GM12878 (cell line): ENCODE measurements at regions of chr6 and their contacts with region 1.

Region 1: DNA sequence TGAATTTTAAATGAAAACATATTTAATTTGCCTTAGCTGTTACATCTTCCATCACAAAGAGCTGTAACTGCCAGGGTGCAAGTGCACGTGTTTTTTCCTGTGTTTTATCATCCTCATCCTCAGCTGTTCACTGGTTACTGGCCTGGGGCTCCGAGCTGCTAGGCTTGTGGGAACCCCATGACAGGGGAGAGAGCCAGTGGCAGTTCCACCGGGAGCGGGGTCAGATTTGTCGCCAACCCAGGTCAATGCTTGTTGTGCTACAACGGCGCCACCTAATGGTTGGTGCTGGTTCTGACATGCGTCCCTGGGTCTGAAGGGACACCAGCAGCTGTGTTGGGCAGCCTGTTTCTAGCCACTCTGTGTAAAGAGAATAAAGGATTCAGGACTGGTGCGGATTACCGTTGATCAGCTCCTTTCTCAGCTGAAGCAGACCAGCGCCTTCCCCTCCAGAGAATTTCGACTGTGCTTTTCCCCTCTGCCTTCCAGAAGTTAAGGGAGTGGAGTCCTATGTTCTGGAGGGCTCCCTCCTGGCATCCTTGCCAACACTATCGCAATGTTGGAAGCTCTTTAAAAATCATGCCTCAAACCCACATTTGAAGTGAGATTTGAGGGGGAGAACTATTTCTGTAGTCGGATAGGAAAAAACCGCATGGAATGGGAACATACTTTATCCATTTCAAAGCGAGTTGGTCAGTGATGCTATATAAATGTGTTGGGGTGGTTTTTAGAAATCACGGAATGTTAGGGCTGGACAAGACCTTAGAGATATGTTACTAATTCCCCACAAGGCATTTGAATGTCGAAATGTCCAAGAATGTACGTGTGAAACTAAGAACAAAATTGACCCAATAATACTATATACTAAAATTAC is 32.1 kb downstream of the SUMO4 start:
- DNase-seq: peak; percentile 60
- ATAC-seq: peak; percentile 99
- H3K4me3 ChIP-seq: no peak overlapping the region
- H3K27ac ChIP-seq: no peak overlapping the region
- H3K4me1 ChIP-seq: no peaks in the 10 kb centered on the region
- H3K27me3 ChIP-seq: no peaks in the 10 kb centered on the region; a peak in 1 of 4 replicates
- CTCF ChIP-seq: peak; percentile 87 to 95 (median 93)
- EP300 ChIP-seq: no peak
- POLR2A ChIP-seq: no peak
- RAD21 ChIP-seq: peak; percentile 94

Region 2: GRCh38 chr6:148559848-148560433 is 872.2 kb before region 1 on chr6:
- CTCF ChIA-PET with region 1: interaction called, 3 read pairs
- POLR2A ChIA-PET with region 1: no interaction called
- RAD21 ChIA-PET with region 1: interaction called, 10 read pairs
- SMC1A ChIA-PET with region 1: interaction called, 4 read pairs
- in situ Hi-C with region 1: no loop called
- intact Hi-C with region 1: no loop called
- DNase-seq: no peak
- ATAC-seq: peak; percentile 97
- H3K4me3 ChIP-seq: 0 out of 2 replicates have a peak overlapping the region, but pooled peaks have one; percentile 39
- H3K27ac ChIP-seq: no peak overlapping the region
- H3K4me1 ChIP-seq: no peaks in the 10 kb centered on the region
- H3K27me3 ChIP-seq: peaks cover 0 to 4% of the 10 kb centered on the region in 2 experiments; a peak in 1 of 4 replicates
- CTCF ChIP-seq: peak; percentile 89 to 95 (median 92)
- EP300 ChIP-seq: no peak
- POLR2A ChIP-seq: no peak
- RAD21 ChIP-seq: peak; percentile 89

Region 3: GRCh38 chr6:149028767-149029405 is 403.3 kb before region 1 on chr6:
- CTCF ChIA-PET with region 1: interaction called, 169 read pairs
- POLR2A ChIA-PET with region 1: interaction called, 14 read pairs
- RAD21 ChIA-PET with region 1: interaction called, 145 read pairs
- SMC1A ChIA-PET with region 1: interaction called, 135 read pairs
- in situ Hi-C with region 1: loop called (anchors 5 kb)
- intact Hi-C with region 1: loop called (anchors 1 kb)
- DNase-seq: peak; percentile 72
- ATAC-seq: no peak
- H3K4me3 ChIP-seq: no peak overlapping the region
- H3K27ac ChIP-seq: no peak overlapping the region
- H3K4me1 ChIP-seq: peaks cover 8% of the 10 kb centered on the region
- H3K27me3 ChIP-seq: no peaks in the 10 kb centered on the region
- CTCF ChIP-seq: peak; percentile 40 to 79 (median 53); a peak in 5 of 6 replicates
- EP300 ChIP-seq: no peak
- POLR2A ChIP-seq: no peak
- RAD21 ChIP-seq: peak; percentile 91

Region 4: DNA sequence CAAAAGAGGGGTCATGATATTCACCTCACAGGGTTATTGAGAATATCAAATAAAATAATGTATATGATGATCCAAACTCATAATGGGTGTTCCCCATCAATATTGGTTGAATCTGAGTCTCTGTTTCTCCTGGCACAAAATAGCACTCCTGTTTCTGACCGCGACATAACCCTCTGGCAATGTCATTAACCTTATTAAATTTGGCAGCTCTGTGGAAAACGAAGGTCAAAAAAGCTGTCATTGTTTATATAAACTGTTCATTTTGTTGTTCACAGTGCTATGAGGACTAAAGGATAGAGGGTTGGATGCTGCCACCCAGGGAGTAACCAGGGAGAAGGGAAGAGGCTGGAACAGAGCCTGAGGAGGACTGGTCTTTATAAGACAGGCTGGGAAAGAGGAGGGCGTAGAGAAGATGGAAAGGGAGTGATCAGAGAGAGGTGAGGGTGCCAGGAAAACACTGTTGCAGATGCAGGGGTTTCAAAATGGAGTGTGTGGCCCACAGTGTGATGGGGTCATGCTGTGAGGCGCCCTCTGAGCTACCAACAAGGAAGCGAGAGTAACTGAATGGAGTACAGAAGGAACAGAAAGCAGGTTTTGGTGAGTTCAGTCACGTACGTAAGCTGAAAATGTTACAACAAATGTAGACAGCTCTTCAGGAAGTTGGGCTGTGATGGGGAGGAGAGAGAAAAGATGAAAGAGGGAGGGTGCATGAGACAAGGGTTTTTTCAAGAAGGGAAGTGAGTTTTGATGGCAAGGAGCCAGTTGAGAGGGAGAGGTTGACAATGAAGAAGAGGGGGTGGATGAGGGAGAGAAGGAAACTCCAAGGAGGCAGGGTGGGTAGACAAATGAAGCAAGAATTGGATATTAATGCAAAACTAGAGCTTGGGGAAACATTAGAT is 366.2 kb before region 1 on chr6:
- CTCF ChIA-PET with region 1: interaction called, 10 read pairs
- POLR2A ChIA-PET with region 1: no interaction called
- RAD21 ChIA-PET with region 1: interaction called, 11 read pairs
- SMC1A ChIA-PET with region 1: interaction called, 8 read pairs
- in situ Hi-C with region 1: no loop called
- intact Hi-C with region 1: no loop called
- DNase-seq: peak; percentile 99
- ATAC-seq: peak; percentile 95
- H3K4me3 ChIP-seq: no peak overlapping the region; the same call in 1 of the 2 replicates
- H3K27ac ChIP-seq: peak overlapping the region; percentile 95
- H3K4me1 ChIP-seq: peaks cover 42% of the 10 kb centered on the region
- H3K27me3 ChIP-seq: no peaks in the 10 kb centered on the region
- CTCF ChIP-seq: no peak
- EP300 ChIP-seq: peak; percentile 91 to 97; a peak in 3 of 4 replicates
- POLR2A ChIP-seq: peak; percentile 76
- RAD21 ChIP-seq: no peak; the same call in 1 of the 2 replicates

Region 5: GRCh38 chr6:149147938-149148718 is 284.0 kb before region 1 on chr6:
- CTCF ChIA-PET with region 1: interaction called, 5 read pairs
- POLR2A ChIA-PET with region 1: no interaction called
- RAD21 ChIA-PET with region 1: interaction called, 3 read pairs
- SMC1A ChIA-PET with region 1: interaction called, 12 read pairs
- in situ Hi-C with region 1: no loop called
- intact Hi-C with region 1: no loop called
- DNase-seq: no peak
- ATAC-seq: peak; percentile 93
- H3K4me3 ChIP-seq: no peak overlapping the region
- H3K27ac ChIP-seq: no peak overlapping the region
- H3K4me1 ChIP-seq: peaks cover 4% of the 10 kb centered on the region
- H3K27me3 ChIP-seq: no peaks in the 10 kb centered on the region
- CTCF ChIP-seq: no peak
- EP300 ChIP-seq: peak; percentile 62 to 71; a peak in 2 of 4 replicates
- POLR2A ChIP-seq: no peak
- RAD21 ChIP-seq: 0 out of 2 replicates have a peak, but pooled peaks have one; percentile 1

Region 6: GRCh38 chr6:149414009-149414408 is 18.1 kb before region 1 on chr6:
- CTCF ChIA-PET with region 1: interaction called, 17 read pairs
- POLR2A ChIA-PET with region 1: no interaction called
- RAD21 ChIA-PET with region 1: interaction called, 29 read pairs
- SMC1A ChIA-PET with region 1: interaction called, 28 read pairs
- in situ Hi-C with region 1: no loop called
- intact Hi-C with region 1: no loop called
- DNase-seq: no peak
- ATAC-seq: no peak
- H3K4me3 ChIP-seq: no peak overlapping the region
- H3K27ac ChIP-seq: no peak overlapping the region
- H3K4me1 ChIP-seq: 0 out of 2 replicates have a peak, but pooled peaks cover 3% of the 10 kb centered on the region
- H3K27me3 ChIP-seq: no peaks in the 10 kb centered on the region
- CTCF ChIP-seq: no peak
- EP300 ChIP-seq: no peak
- POLR2A ChIP-seq: no peak
- RAD21 ChIP-seq: no peak

Region 7: DNA sequence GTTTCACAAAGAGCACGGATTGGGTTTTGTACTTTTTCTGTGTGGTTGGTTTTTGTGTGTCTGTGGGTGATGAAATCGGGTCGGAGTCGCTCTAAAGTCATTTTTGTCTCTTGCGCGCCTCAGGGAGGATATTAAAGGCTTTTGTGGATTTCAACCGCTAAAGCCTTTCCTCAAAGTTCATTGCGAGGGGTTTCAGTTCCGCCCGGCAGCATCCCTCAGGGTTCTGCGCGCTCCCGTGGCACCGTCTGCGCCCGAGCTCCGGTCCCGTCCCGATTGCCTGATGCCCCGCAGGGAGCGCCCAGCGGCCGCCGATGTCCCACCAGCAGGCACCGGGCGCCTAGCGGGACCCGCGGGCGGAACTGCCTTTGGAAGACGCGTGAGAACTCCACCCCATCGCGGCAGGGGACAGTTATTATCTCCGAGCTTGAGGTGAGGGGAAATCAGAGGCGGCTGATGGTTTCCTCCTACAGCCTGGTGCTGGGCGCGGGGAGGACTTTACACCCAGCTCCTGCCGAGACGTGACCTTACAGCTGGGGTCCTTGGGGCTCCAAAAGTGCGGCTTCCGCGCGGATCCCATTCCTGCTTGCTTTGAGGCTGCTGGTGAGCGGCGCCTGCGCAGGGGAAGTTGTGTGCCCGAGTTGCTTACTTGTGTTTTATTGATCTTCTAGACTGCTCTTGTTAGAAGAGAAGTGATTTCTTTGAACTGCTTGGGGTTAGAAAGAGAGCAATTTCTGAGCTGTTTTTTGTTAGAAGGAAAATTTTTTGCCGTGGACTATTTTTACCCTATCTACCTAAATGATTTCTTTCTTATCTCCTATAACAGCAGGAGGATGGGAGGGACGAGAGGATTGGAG is 558.7 kb after region 1 on chr6:
- CTCF ChIA-PET with region 1: no interaction called
- POLR2A ChIA-PET with region 1: no interaction called
- RAD21 ChIA-PET with region 1: no interaction called
- SMC1A ChIA-PET with region 1: no interaction called
- in situ Hi-C with region 1: no loop called
- intact Hi-C with region 1: no loop called
- DNase-seq: no peak
- ATAC-seq: peak; percentile 77
- H3K4me3 ChIP-seq: peak overlapping the region; percentile 49; the same call in 1 of the 2 replicates
- H3K27ac ChIP-seq: no peak overlapping the region
- H3K4me1 ChIP-seq: peaks cover 14% of the 10 kb centered on the region
- H3K27me3 ChIP-seq: peaks cover 5 to 22% of the 10 kb centered on the region in 2 experiments
- CTCF ChIP-seq: no peak
- EP300 ChIP-seq: no peak
- POLR2A ChIP-seq: no peak
- RAD21 ChIP-seq: no peak